ENCODE measurements at regions of chr5 and their contacts with region 1.

Region 1: DNA sequence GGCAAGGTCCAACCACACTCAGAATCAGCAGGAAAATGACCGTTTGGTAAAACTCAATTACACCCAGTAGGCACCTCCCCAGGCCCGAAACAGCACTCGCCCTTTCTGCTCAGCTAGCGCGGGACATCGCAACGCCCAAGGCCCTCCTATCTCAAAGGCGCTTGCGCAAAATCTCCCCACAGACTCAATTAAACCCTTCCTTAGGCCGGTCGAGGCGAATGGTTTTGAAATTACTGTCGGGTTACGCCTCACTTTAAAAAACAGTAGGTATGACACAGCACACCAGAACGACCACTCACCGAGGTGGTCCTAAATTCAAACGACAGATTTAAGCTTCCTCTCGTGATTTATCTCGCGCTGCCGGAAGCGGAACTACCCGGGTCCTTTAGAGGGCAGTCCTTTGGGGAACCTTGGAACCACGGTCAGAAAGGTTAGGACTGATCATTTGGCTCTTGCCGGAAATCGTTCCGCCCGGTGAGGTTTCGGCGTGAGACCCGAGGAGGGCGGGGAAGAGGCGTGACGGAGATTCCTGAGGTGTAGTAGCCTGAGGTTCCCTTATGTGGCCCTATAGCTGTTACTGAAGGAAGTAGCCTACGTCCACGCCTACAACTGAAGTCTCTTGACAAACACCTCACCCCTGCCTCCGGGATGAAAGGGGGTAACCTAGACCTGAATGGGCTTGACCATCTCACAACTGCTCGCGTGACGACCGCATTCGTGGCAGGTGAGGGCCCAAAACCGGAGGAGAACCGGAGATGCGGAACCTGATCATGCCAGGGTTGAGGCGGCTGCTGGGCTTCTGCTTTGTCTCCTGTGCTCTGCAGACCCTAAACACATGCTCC is at the starts of genes GIN1 and PPIP5K2:
- DNase-seq: peak; percentile 99
- H3K4me3 Mint-ChIP-seq: peak within 1 kb of the TSS; percentile 88
- H3K27ac Mint-ChIP-seq: peak within 1 kb of the TSS; percentile 97
- H3K4me1 Mint-ChIP-seq: peaks cover 34% of the 10 kb centered on the region
- H3K27me3 Mint-ChIP-seq: no peaks in the 10 kb centered on the region
- total RNA-seq, gene GIN1: 7.5 and 12.1 TPM in 2 replicates
- total RNA-seq, gene PPIP5K2: 46.2 and 46.3 TPM in 2 replicates

Region 2: GRCh38 chr5:102755686-102756371 is 364.2 kb before region 1 on chr5:
- intact Hi-C with region 1: loop called (anchors 1 kb)
- DNase-seq: peak; percentile 88
- H3K4me3 Mint-ChIP-seq: peak overlapping the region; percentile 95
- H3K27ac Mint-ChIP-seq: peak overlapping the region; percentile 97
- H3K4me1 Mint-ChIP-seq: peaks cover 43% of the 10 kb centered on the region
- H3K27me3 Mint-ChIP-seq: peaks cover 2% of the 10 kb centered on the region

Region 3: DNA sequence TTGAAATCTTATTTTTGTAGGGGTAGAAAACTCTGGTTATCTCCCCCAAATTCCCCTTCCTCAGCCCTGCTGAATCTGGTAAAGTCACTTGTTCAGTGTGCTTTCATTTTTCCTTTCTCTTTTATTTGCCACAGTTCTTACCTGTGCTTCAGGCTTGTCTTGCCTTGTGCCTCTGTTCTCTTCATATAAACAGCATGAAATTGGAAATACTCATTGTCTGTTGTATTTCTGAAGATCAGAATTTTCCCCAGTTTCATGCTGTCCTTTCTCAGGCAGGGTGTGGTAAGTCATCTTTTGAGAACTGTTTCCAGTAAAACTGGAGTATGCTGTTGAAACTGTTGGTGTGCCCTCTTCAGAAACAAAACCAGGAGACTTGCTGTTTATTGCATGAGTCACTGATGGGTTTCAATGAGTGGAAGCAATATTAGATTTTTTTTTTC is 357.9 kb before region 1 on chr5:
- intact Hi-C with region 1: loop called (anchors 2 kb)
- DNase-seq: peak; percentile 69
- H3K4me3 Mint-ChIP-seq: peak overlapping the region; percentile 82
- H3K27ac Mint-ChIP-seq: peak overlapping the region; percentile 90
- H3K4me1 Mint-ChIP-seq: peaks cover 68% of the 10 kb centered on the region
- H3K27me3 Mint-ChIP-seq: no peaks in the 10 kb centered on the region

Region 4: DNA sequence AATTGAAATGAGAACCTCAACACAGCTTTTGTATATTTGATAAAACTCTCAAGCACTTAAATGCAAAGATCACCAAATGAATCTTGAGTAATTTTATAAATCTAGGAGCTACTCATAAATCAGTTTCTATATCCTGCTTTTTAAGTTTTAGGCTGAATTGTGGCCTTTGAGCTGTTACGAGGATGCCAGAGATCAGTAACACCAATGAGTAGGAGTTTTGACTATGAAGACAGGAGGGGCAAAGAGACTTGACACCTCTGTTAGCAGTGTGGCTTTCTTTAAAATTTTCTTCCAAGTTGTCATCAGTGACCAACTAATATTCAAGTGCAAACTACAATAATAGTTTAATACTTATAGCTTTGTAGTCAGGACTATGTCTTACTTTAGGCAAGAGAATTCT is 12.7 kb after region 1 on chr5:
- intact Hi-C with region 1: loop called (anchors 1 kb)
- DNase-seq: no peak
- H3K4me3 Mint-ChIP-seq: no peak overlapping the region
- H3K27ac Mint-ChIP-seq: no peak overlapping the region
- H3K4me1 Mint-ChIP-seq: peaks cover 11% of the 10 kb centered on the region
- H3K27me3 Mint-ChIP-seq: no peaks in the 10 kb centered on the region

Region 5: GRCh38 chr5:103139264-103139865 is 19.4 kb after region 1 on chr5:
- intact Hi-C with region 1: loop called (anchors 2 kb)
- DNase-seq: peak; percentile 94
- H3K4me3 Mint-ChIP-seq: no peak overlapping the region
- H3K27ac Mint-ChIP-seq: no peak overlapping the region
- H3K4me1 Mint-ChIP-seq: peaks cover 4% of the 10 kb centered on the region
- H3K27me3 Mint-ChIP-seq: no peaks in the 10 kb centered on the region

Region 6: GRCh38 chr5:103224118-103224893 is 104.3 kb after region 1 on chr5:
- intact Hi-C with region 1: loop called (anchors 5 kb)
- DNase-seq: peak; percentile 87
- H3K4me3 Mint-ChIP-seq: no peak overlapping the region
- H3K27ac Mint-ChIP-seq: no peak overlapping the region
- H3K4me1 Mint-ChIP-seq: peaks cover 2% of the 10 kb centered on the region
- H3K27me3 Mint-ChIP-seq: peaks cover 38% of the 10 kb centered on the region

Region 7: DNA sequence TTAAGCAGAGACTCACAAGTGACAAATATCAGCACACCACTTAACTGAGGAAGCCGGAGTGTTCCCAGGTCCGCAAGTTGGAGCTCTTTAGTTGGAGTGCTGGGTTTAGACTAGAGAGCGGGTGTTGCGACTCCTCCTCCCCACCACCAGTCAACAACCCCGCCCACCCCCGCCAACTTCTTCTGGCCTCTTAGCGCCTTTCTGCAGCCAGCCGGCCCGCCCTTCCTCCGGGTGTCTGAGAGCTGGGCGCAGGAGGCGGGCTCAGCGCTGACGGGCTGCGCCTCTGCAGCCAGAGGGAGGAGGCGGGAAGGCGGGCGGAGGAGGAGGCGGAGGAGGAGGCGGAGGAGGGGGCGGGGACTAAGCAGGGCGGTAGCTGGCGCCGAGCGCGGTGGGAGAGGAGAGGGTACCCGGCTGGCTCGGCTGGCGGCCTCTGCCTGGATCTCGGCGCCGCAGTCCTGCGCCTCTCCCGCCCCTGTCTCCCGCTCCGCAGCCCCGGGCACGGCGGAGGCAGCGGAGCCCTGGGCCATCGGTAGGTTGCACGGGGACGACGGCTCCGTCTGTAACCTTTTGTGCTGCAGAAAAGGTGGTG is 138.5 kb after region 1 on chr5 and contains the start of gene MACIR:
- intact Hi-C with region 1: loop called (anchors 1 kb)
- DNase-seq: peak; percentile 98
- H3K4me3 Mint-ChIP-seq: peak within 1 kb of the TSS; percentile 88
- H3K27ac Mint-ChIP-seq: peak within 1 kb of the TSS; percentile 87
- H3K4me1 Mint-ChIP-seq: peaks cover 23% of the 10 kb centered on the region
- H3K27me3 Mint-ChIP-seq: peaks cover 14% of the 10 kb centered on the region
- total RNA-seq, gene MACIR: 12.1 and 13.3 TPM in 2 replicates

Measured in activated CD4-positive, alpha-beta T cell treated with anti-CD3 and anti-CD28 coated beads, Interleukin-2, amount 10 ng/mL, durations not matched to agents 24 days and 14 days (primary cell).